Panc1 (cell line): ENCODE measurements at regions of chr6 and their contacts with region 1.

Region 1: GRCh38 chr6:42505377-42505702 is 53.6 kb upstream of the TRERF1 start:
- DNase-seq: peak; percentile 57
- ATAC-seq: peak; percentile 61; the same call in 1 of the 2 replicates
- H3K4me3 ChIP-seq: peak overlapping the region in 1 of 2 experiments; percentile 24; a peak in 2 of 4 replicates
- H3K27ac ChIP-seq: peak overlapping the region; percentile 70
- H3K4me1 ChIP-seq: no peaks in the 10 kb centered on the region; the same call in 1 of the 2 replicates
- H3K27me3 ChIP-seq: no peaks in the 10 kb centered on the region
- CTCF ChIP-seq: no peak

Region 2: DNA sequence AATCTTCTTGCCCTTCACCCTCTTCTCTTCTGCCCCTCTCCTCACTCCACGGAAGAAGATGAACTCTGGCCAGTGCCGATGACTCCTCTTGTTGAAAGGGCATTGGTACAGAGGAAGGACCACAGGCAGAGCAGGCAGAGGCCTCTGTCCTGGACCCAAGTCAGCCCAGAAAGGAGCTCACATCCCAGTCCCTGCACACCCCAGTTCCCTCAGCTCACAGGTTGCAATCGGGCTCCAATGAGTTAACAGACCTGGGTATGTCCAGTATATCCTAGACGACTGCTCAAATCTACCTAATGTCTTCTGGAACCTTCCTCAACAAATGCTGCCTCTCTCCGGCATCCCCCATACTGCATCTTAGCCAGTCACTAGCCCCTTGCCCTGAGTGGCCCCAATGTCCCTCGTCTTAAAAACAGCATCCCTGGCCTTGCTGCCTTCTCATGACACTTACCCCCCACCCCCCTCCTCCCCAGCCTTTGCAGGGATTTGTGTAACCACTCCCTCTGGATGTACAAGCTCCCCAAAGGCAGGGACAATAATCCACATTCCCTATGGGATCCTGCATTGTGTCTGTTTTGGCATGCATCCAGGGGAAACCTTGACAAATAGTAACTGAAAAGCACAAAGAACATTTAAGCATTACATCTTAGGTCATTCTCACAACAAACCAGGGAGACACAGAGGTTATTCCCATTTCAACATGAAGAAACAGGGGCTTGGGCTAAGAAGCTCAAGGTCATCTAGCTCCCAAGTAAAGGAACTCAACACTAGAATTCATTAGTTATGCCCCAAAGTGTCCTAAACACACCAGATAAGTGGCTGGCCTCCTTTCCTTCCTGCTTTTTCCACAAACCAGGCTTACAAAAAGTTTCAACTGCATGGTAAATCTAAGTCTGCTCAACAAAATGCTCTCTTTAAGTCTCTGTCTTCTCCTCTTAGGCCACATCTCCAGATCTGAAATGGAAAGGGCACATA is 98.7 kb before region 1 on chr6:
- CTCF ChIA-PET with region 1: no interaction called
- POLR2A ChIA-PET with region 1: interaction called, 12 read pairs
- in situ Hi-C with region 1: no loop called
- intact Hi-C with region 1: no loop called
- DNase-seq: no peak
- ATAC-seq: no peak
- H3K4me3 ChIP-seq: no peak overlapping the region
- H3K27ac ChIP-seq: 0 out of 2 replicates have a peak overlapping the region, but pooled peaks have one; percentile 8
- H3K4me1 ChIP-seq: peaks cover 59% of the 10 kb centered on the region
- H3K27me3 ChIP-seq: no peaks in the 10 kb centered on the region
- CTCF ChIP-seq: no peak

Region 3: GRCh38 chr6:42520786-42521607 is 15.7 kb after region 1 on chr6:
- CTCF ChIA-PET with region 1: interaction called, 10 read pairs
- POLR2A ChIA-PET with region 1: no interaction called
- in situ Hi-C with region 1: no loop called
- intact Hi-C with region 1: no loop called
- DNase-seq: no peak
- ATAC-seq: no peak
- H3K4me3 ChIP-seq: no peak overlapping the region
- H3K27ac ChIP-seq: no peak overlapping the region
- H3K4me1 ChIP-seq: no peaks in the 10 kb centered on the region
- H3K27me3 ChIP-seq: no peaks in the 10 kb centered on the region
- CTCF ChIP-seq: no peak